Posterior cingulate gyrus (tissue), 11 donors: ENCODE measurements at regions of chr2 and their contacts with region 1.

Region 1: GRCh38 chr2:125745514-125745913 is 910.4 kb upstream of the GYPC start:
- DNase-seq: peak in 7 of 10 donors; percentile 11 to 92 (median 56)

Region 2: GRCh38 chr2:125596612-125597011 is 148.9 kb before region 1 on chr2:
- intact Hi-C with region 1: no loop called
- DNase-seq: no peak

Region 3: DNA sequence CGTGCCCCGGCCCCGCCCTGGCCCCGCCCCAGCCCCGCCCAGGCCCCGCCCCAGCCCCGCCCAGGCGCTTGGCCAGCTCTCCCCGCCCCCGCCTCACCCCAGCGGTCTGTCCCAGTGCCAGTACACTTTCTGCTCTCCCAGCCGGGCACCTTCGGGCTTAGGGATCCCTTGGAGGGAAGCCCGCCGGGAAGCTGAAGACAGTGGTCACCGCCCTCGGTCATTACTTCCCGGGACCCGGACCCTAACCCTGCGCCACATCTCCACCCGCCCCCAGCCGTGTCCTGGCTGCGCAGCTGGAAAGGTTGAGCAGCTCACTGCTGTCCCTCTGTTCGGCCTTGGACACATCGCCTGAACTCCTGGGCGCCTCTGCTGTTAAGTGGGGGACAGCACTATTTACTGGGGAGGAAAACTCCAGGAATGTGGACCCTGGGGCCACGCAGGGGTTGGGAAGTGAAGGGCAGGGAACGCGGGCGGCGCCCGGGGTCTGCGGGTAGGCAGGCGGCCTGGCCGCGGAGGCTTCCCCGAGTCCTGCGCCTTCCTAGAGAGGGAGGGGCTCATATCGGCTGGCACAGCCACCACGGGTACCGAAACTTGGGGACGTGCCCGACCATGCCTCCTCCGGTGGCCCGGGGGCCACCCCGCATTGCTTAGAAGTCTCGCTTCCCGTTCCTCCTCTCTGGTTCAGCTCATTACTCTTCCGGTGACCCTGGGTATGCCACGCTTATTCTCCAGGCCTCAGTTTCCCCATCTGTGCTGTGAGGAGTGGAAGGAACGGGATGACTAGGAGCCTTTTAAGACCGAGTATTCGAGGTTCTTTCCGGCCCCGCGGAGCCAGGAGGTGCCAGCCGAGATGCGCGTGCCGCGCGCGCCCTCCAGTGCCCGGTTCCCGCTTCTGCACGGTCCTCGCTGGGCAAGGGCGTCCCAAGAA is 1031.4 kb after region 1 on chr2:
- intact Hi-C with region 1: loop called (anchors 1 kb)
- DNase-seq: peak; percentile 80 to 98 (median 90)